ENCODE measurements at regions of chr22 and their contacts with region 1.

Region 1: GRCh38 chr22:27919222-27919941 is at the start of gene PITPNB:
- DNase-seq: peak; percentile 100
- H3K4me3 Mint-ChIP-seq: peak within 1 kb of the TSS; percentile 97
- H3K27ac Mint-ChIP-seq: peak within 1 kb of the TSS; percentile 99
- H3K4me1 Mint-ChIP-seq: peaks cover 64% of the 10 kb centered on the region
- H3K27me3 Mint-ChIP-seq: peaks cover 4% of the 10 kb centered on the region
- total RNA-seq, gene PITPNB: 148 TPM in 2 replicates

Region 2: DNA sequence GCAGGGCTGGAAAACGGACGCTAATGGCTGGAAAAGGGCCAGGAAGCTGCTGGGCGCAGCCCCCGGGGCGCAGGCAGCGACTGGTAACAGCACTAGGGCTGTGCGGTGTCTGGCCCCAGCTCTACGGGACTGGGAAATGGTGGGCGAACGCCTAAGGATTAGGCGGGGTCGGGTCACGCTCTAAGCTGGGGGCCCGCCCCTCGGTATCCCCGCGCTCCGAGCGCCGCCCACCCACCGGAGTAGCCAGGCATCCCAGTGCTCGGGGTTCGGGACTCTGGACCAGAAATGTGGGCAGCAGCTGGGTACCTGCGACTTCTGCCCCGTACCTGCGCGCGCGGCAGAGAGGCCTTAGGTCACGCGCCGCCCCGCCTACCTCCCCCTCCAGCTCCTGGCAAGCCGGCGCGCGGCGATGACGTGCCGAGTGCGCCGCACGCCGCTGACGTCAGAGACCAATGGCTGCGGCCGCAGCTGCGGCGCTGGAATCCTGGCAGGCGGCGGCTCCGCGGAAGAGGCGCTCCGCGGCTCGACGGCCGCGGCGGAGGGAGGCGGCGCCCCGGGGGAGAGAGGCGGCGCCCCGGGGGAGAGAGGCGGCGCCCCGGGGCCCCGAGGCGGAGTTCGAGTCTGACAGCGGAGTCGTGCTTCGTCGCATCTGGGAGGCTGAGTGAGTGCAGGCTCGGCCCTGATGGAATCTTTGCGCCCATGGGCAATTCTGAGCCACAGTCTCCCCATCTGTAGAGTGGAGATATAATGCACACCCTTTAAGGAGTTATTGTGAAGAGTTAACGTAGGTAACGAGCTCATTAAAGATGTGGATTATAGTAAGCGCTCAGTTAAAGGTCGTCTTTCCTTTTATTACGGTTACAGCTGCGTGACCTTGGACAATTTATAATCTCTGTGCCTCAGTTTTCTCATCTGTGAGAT is 1435.7 kb before region 1 on chr22 and contains the starts of genes HPS4 and SRRD:
- intact Hi-C with region 1: loop called (anchors 5 kb)
- DNase-seq: peak; percentile 98
- H3K4me3 Mint-ChIP-seq: peak within 1 kb of the TSS; percentile 78
- H3K27ac Mint-ChIP-seq: peak within 1 kb of the TSS; percentile 89
- H3K4me1 Mint-ChIP-seq: peaks cover 56% of the 10 kb centered on the region
- H3K27me3 Mint-ChIP-seq: no peaks in the 10 kb centered on the region
- total RNA-seq, gene HPS4: 47.0 and 51.2 TPM in 2 replicates
- total RNA-seq, gene SRRD: 28.1 and 32.4 TPM in 2 replicates

Region 3: DNA sequence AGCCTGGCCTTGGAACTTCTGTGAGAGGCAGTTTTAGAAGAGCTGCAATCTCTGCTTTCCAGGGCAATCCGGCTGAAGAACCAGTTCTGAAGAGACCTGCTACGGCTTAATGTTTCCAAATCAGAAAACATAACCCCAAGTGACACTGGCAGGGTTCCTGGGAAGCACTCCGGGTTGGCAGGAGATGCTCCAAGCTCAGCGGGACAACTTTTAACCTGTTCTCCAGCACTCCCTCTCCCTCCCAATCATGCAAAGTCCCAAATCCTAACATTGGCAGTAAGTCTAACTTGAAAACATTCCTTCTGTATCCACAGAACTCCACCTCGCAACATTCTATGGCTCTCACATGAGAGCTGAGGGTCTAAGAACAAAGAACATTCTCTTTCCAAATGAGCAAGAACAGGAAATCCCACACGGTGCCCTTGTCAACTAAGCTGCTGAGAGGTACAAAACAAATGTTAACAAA is 69.3 kb before region 1 on chr22:
- intact Hi-C with region 1: no loop called
- DNase-seq: no peak
- H3K4me3 Mint-ChIP-seq: no peak overlapping the region
- H3K27ac Mint-ChIP-seq: no peak overlapping the region
- H3K4me1 Mint-ChIP-seq: peaks cover 11% of the 10 kb centered on the region
- H3K27me3 Mint-ChIP-seq: no peaks in the 10 kb centered on the region

Region 4: DNA sequence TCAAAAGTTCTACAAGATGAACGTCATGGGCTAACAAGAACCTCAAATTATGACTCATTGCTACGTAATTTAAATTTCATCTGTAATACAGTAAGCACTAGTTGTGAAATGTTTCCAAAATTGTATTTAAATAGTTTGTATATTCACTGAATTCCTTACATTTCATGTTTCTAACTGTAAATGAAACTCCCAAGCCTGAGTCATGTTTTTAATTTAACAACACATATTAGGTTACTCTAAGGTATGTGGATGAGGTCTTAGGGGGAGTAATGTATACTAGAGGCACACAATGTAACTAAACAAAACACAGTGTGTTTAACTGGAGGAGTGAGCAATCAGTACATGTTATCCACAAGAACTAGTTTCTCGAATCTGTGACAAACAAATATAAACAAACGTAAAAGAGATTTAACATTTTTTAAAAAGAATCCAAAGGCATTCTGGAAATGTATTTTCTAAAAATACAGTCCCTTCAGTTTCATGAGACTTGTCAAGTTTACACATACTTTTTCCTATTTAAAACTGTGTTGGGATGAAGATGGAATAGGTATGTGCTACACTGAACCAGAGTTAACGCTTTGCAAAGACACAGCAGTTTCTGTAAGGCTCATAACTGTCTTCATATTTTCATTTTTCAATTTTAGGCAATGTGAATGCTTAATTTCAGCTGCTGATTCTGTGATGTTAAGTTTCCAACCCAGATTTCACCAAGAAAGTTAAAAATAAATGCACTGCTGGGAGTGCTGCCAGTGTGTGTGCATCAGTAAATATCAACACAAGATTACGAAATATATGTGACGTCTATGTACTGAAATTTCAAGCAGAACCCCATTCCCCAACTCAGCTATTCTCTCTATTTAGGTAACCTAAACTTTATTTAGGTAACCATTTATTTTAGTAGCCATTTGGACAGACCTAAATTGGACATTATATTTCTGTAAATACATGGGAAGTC is 53.0 kb before region 1 on chr22:
- intact Hi-C with region 1: loop called (anchors 5 kb)
- DNase-seq: no peak
- H3K4me3 Mint-ChIP-seq: peak overlapping the region; percentile 29
- H3K27ac Mint-ChIP-seq: peak overlapping the region; percentile 77
- H3K4me1 Mint-ChIP-seq: peaks cover 42% of the 10 kb centered on the region
- H3K27me3 Mint-ChIP-seq: no peaks in the 10 kb centered on the region

Region 5: GRCh38 chr22:27903805-27904473 is 15.4 kb before region 1 on chr22:
- intact Hi-C with region 1: loop called (anchors 1 kb)
- DNase-seq: peak; percentile 53
- H3K4me3 Mint-ChIP-seq: peak overlapping the region; percentile 47
- H3K27ac Mint-ChIP-seq: peak overlapping the region; percentile 77
- H3K4me1 Mint-ChIP-seq: peaks cover 40% of the 10 kb centered on the region
- H3K27me3 Mint-ChIP-seq: no peaks in the 10 kb centered on the region

Region 6: GRCh38 chr22:28172892-28173670 is 253.7 kb after region 1 on chr22:
- intact Hi-C with region 1: no loop called
- DNase-seq: no peak
- H3K4me3 Mint-ChIP-seq: no peak overlapping the region
- H3K27ac Mint-ChIP-seq: no peak overlapping the region
- H3K4me1 Mint-ChIP-seq: no peaks in the 10 kb centered on the region
- H3K27me3 Mint-ChIP-seq: peaks cover 2% of the 10 kb centered on the region

Region 7: GRCh38 chr22:28882878-28883656 is 963.7 kb after region 1 on chr22 and contains the start of gene ZNRF3:
- intact Hi-C with region 1: loop called (anchors 2 kb)
- DNase-seq: peak; percentile 94
- H3K4me3 Mint-ChIP-seq: peak within 1 kb of the TSS; percentile 80
- H3K27ac Mint-ChIP-seq: peak within 1 kb of the TSS; percentile 66
- H3K4me1 Mint-ChIP-seq: peaks cover 8% of the 10 kb centered on the region
- H3K27me3 Mint-ChIP-seq: peaks cover 65% of the 10 kb centered on the region
- total RNA-seq, gene ZNRF3: 2.0 and 2.3 TPM in 2 replicates